GM12878 (cell line): ENCODE measurements at regions of chr9 and their contacts with region 1.

Region 1: GRCh38 chr9:88660611-88661010 is 125.6 kb downstream of the NXNL2 start:
- DNase-seq: no peak
- ATAC-seq: no peak
- H3K4me3 ChIP-seq: no peak overlapping the region
- H3K27ac ChIP-seq: no peak overlapping the region
- H3K4me1 ChIP-seq: no peaks in the 10 kb centered on the region
- H3K27me3 ChIP-seq: no peaks in the 10 kb centered on the region
- CTCF ChIP-seq: peak in 2 of 3 experiments; percentile 6 to 22; a peak in 4 of 6 replicates
- EP300 ChIP-seq: no peak
- POLR2A ChIP-seq: no peak
- RAD21 ChIP-seq: peak; percentile 39; the same call in 1 of the 2 replicates

Region 2: GRCh38 chr9:89000973-89001916 is 340.6 kb after region 1 on chr9:
- CTCF ChIA-PET with region 1: interaction called, 3 read pairs
- POLR2A ChIA-PET with region 1: no interaction called
- RAD21 ChIA-PET with region 1: no interaction called
- SMC1A ChIA-PET with region 1: no interaction called
- in situ Hi-C with region 1: no loop called
- intact Hi-C with region 1: loop called (anchors 5 kb)
- DNase-seq: no peak
- ATAC-seq: peak; percentile 91
- H3K4me3 ChIP-seq: no peak overlapping the region
- H3K27ac ChIP-seq: no peak overlapping the region
- H3K4me1 ChIP-seq: no peaks in the 10 kb centered on the region
- H3K27me3 ChIP-seq: peaks cover 0 to 1% of the 10 kb centered on the region in 2 experiments; a peak in 1 of 4 replicates
- CTCF ChIP-seq: peak; percentile 58 to 72 (median 63); a peak in 5 of 6 replicates
- EP300 ChIP-seq: no peak
- POLR2A ChIP-seq: no peak
- RAD21 ChIP-seq: peak; percentile 85